Tibial artery (tissue), 4 donors: ENCODE measurements at regions of chr6 and their contacts with region 1.

Region 1: GRCh38 chr6:35688581-35689322 is at the start of gene FKBP5:
- DNase-seq: peak; percentile 97 to 98
- H3K4me3 ChIP-seq: peak within 1 kb of the TSS; percentile 91 to 98
- H3K27ac ChIP-seq: peak within 1 kb of the TSS; percentile 98 to 99
- H3K4me1 ChIP-seq: peaks cover 0 to 58% (median 36%) of the 10 kb centered on the region in 4 donors
- H3K27me3 ChIP-seq: no peaks in the 10 kb centered on the region
- CTCF ChIP-seq: peak in 1 of 2 experiments; percentile 5

Region 2: DNA sequence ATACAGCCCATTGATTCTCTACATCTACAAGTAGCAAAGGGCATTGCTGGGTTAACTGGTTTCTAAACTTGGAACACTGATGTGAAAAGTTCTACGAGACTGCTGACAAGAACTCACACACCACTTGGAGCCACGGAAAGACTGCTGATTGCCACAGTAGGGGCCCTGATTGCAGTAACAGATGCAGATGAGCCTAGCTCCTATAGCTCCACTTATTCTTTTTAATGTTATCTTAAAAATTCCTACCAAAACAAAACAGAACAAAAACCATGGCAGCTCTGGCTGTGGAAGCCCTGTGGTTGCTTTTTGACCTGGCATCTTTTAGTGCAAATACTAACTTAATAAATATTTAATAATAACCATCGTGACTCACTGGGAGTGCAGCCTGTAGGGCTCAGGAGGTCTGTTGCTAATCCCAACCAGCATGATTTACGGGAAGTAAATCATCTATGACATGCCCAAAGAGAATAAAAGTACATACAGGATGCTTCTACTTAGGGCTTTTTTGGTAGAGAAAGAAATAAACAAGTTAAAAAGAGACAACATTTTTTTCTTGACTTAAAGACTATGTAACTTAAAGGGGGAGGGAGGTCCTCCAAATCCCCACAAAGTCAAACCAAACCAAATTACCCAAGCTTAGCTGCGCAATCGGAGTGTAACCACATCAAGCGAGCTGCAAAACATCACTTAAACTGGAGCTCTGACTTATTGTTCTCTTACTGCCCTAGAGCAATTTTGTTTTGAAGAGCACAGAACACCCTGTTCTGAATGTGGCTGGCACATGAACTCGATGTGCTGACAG is 87.2 kb before region 1 on chr6:
- intact Hi-C with region 1: loop called (anchors 5 kb)
- DNase-seq: peak; percentile 86 to 88
- H3K4me3 ChIP-seq: peak overlapping the region; percentile 0 to 30
- H3K27ac ChIP-seq: peak overlapping the region; percentile 88 to 93
- H3K4me1 ChIP-seq: peaks cover 6 to 92% (median 73%) of the 10 kb centered on the region in 4 donors
- H3K27me3 ChIP-seq: no peaks in the 10 kb centered on the region
- CTCF ChIP-seq: no peak

Region 3: GRCh38 chr6:35731736-35732532 is 43.2 kb after region 1 on chr6:
- intact Hi-C with region 1: loop called (anchors 2 kb)
- DNase-seq: peak; percentile 97 to 99
- H3K4me3 ChIP-seq: peak overlapping the region; percentile 59 to 74
- H3K27ac ChIP-seq: peak overlapping the region; percentile 97 to 99
- H3K4me1 ChIP-seq: peaks cover 6 to 94% (median 70%) of the 10 kb centered on the region in 4 donors
- H3K27me3 ChIP-seq: no peaks in the 10 kb centered on the region
- CTCF ChIP-seq: peak; percentile 6 to 24